Activated CD4-positive, alpha-beta T cell treated with anti-CD3 and anti-CD28 coated beads for 36 hours (primary cell): ENCODE measurements at regions of chr12 and their contacts with region 1.

Region 1: DNA sequence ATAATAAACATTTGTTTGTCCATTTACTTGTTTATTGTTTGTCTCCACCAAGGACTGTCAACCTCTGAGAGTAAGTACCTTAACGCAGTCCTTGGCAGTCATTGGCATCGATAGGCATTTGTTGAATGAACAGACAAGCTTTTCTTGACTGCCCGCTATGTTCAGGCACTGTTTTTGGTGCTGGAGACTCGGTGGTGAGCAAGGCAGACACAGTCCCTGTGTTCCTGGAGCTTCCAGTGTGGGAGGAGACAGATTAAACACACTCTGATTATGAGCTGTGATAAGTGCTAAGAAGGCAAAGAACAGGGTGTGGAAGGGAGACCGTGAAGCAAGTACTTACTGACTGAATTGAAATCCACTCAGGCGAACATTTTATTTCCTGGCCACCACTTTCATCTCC is 1.2 kb downstream of the ATP6V0A2 start:
- DNase-seq: peak; percentile 35
- ATAC-seq: peak; percentile 11
- H3K4me3 Mint-ChIP-seq: peak overlapping the region; percentile 96
- H3K27ac Mint-ChIP-seq: peak overlapping the region; percentile 96
- H3K4me1 Mint-ChIP-seq: peaks cover 46% of the 10 kb centered on the region
- H3K27me3 Mint-ChIP-seq: no peaks in the 10 kb centered on the region

Region 2: GRCh38 chr12:122593910-122594309 is 1119.5 kb before region 1 on chr12:
- CTCF ChIA-PET with region 1: no interaction called
- POLR2A ChIA-PET with region 1: no interaction called
- intact Hi-C with region 1: no loop called
- DNase-seq: peak; percentile 32
- ATAC-seq: peak; percentile 94
- H3K4me3 Mint-ChIP-seq: no peak overlapping the region
- H3K27ac Mint-ChIP-seq: peak overlapping the region; percentile 70
- H3K4me1 Mint-ChIP-seq: peaks cover 8% of the 10 kb centered on the region
- H3K27me3 Mint-ChIP-seq: no peaks in the 10 kb centered on the region

Region 3: DNA sequence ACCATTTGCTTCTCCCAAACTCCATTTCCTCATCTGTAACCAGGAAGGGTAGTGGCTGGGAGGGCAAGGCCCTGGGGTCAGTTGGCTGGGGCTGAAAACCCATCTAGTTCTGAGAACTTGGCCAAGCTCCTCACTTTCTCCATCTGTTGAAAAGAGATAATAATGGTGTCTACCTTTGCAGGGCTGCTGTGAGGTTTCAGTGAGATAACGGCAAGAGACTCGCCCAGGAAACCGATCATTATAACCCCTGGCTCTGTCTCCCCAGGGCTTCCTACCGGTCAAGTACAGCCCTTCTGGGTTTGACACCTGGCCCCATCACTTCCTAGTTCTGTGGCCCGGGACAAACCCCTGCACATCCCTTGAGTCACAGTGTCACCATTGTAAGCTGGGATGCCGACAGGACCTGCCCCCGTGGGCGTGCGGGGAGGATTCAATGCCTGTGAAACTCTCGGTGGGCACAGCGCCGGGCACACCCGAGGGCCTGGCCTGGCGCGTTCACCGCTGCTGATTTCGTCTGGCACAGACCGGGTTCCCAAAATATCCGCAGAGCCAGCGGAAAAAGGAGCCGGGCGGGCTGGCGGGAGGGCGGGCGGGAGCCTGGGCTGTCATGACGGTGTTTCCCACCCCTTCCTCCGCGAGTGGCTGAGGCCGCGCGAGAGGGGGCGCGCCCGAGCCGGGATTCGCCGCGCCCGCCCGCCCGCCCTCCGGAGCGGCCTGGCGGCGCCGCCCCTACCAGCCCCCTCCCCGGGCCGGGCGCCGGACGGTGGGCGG is 325.0 kb before region 1 on chr12:
- CTCF ChIA-PET with region 1: no interaction called
- POLR2A ChIA-PET with region 1: interaction called, 3 read pairs
- intact Hi-C with region 1: loop called in 1 of 2 experiments (anchors 5 kb)
- DNase-seq: peak; percentile 86
- ATAC-seq: peak; percentile 43
- H3K4me3 Mint-ChIP-seq: peak overlapping the region; percentile 76
- H3K27ac Mint-ChIP-seq: peak overlapping the region; percentile 81
- H3K4me1 Mint-ChIP-seq: peaks cover 35% of the 10 kb centered on the region
- H3K27me3 Mint-ChIP-seq: no peaks in the 10 kb centered on the region

Region 4: DNA sequence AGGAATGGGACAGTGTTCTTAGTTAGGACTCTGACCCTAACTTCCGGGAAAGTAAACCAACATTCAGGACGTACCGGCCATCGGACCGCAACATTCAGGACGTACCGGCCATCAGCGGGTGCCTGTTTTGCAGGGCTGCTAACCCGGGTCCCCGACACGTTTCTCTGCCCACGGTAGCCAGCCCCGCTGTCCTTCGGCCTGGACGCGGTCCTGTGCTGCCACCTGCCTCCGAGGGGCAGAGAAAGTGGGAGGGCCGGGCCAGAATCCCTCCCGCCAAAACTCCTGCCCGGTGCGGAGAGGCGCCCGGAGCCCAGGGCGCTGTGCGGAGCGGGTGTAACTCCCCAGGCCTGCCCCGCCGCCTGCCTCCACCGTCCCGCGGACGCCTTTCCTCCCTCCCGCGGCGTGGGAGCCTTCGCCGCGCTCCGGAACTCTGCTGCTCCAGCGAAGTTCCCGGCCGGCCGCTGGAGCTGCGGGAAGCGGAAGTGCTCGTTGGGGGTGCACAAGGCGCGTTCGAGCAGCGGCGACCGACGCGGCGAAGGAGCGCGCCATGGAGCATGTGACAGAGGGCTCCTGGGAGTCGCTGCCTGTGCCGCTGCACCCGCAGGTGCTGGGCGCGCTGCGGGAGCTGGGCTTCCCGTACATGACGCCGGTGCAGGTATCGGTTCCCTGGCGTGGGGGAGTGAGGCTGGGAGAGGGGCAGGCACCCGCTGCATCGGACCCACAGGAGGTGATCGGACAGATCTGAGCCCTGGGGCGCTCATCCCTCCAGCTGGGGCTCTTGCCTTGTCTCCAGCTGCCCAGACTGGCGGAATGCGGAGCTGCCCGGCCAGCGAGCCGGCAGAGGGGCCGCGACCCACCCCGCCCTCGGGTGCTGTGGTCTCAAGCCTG is 111.6 kb before region 1 on chr12 and contains the start of gene DDX55:
- CTCF ChIA-PET with region 1: no interaction called
- POLR2A ChIA-PET with region 1: interaction called, 5 read pairs
- intact Hi-C with region 1: loop called (anchors 1 to 5 kb)
- DNase-seq: peak; percentile 93
- ATAC-seq: peak; percentile 95
- H3K4me3 Mint-ChIP-seq: peak within 1 kb of the TSS; percentile 85
- H3K27ac Mint-ChIP-seq: peak within 1 kb of the TSS; percentile 92
- H3K4me1 Mint-ChIP-seq: peaks cover 36% of the 10 kb centered on the region
- H3K27me3 Mint-ChIP-seq: no peaks in the 10 kb centered on the region
- total RNA-seq, gene DDX55: 44.3 to 49.4 TPM

Region 5: GRCh38 chr12:123723765-123724164 is 10.4 kb after region 1 on chr12:
- CTCF ChIA-PET with region 1: interaction called, 24 read pairs
- POLR2A ChIA-PET with region 1: interaction called, 24 read pairs
- intact Hi-C with region 1: loop called in 1 of 2 experiments (anchors 1 kb)
- DNase-seq: no peak
- ATAC-seq: peak; percentile 28
- H3K4me3 Mint-ChIP-seq: no peak overlapping the region
- H3K27ac Mint-ChIP-seq: peak overlapping the region; percentile 51
- H3K4me1 Mint-ChIP-seq: peaks cover 58% of the 10 kb centered on the region
- H3K27me3 Mint-ChIP-seq: no peaks in the 10 kb centered on the region

Region 6: DNA sequence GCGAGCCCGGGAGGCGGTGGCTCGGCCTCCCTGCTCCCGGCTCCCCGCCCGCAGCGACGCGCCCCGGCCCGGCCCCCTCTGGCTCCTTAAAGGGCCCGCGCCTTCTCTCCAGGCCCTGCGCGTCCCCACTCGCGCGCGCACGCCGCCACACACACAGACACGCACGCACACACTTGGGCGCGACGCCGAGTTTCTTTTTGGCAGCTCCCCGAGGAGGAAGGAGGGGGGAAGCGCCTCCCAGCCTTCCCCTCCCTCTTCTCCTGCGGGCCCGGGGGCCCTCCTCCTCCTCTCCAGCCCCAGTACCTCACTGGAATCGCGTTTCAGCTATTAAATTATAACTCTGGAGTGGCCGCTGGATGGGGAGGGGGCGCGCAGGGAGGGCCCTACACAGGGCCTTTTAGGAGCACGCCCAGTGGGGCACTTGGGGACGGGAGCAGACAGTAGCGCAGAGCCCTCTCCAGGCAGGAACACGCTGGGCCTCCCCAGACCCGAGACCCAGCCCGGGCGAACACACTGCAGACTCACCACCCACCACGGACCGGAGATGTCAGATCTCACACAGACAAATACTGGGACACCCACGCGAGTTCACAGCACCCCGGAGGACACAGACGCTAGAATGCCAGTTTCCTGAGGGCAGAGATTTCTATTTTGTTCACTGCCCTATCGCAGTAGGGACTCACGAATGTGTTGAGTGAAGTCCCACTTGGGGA is 854.4 kb after region 1 on chr12:
- CTCF ChIA-PET with region 1: no interaction called
- POLR2A ChIA-PET with region 1: no interaction called
- intact Hi-C with region 1: loop called in 1 of 2 experiments (anchors 10 kb)
- DNase-seq: peak; percentile 89
- ATAC-seq: peak; percentile 72
- H3K4me3 Mint-ChIP-seq: peak overlapping the region; percentile 75
- H3K27ac Mint-ChIP-seq: peak overlapping the region; percentile 89
- H3K4me1 Mint-ChIP-seq: peaks cover 33% of the 10 kb centered on the region
- H3K27me3 Mint-ChIP-seq: no peaks in the 10 kb centered on the region

Region 7: GRCh38 chr12:125089083-125089482 is 1375.7 kb after region 1 on chr12:
- CTCF ChIA-PET with region 1: no interaction called
- POLR2A ChIA-PET with region 1: no interaction called
- intact Hi-C with region 1: no loop called
- DNase-seq: no peak
- ATAC-seq: no peak
- H3K4me3 Mint-ChIP-seq: no peak overlapping the region
- H3K27ac Mint-ChIP-seq: no peak overlapping the region
- H3K4me1 Mint-ChIP-seq: no peaks in the 10 kb centered on the region
- H3K27me3 Mint-ChIP-seq: no peaks in the 10 kb centered on the region